Common myeloid progenitor, CD34-positive (primary cell): ENCODE measurements at regions of chr14 and their contacts with region 1.

Region 1: DNA sequence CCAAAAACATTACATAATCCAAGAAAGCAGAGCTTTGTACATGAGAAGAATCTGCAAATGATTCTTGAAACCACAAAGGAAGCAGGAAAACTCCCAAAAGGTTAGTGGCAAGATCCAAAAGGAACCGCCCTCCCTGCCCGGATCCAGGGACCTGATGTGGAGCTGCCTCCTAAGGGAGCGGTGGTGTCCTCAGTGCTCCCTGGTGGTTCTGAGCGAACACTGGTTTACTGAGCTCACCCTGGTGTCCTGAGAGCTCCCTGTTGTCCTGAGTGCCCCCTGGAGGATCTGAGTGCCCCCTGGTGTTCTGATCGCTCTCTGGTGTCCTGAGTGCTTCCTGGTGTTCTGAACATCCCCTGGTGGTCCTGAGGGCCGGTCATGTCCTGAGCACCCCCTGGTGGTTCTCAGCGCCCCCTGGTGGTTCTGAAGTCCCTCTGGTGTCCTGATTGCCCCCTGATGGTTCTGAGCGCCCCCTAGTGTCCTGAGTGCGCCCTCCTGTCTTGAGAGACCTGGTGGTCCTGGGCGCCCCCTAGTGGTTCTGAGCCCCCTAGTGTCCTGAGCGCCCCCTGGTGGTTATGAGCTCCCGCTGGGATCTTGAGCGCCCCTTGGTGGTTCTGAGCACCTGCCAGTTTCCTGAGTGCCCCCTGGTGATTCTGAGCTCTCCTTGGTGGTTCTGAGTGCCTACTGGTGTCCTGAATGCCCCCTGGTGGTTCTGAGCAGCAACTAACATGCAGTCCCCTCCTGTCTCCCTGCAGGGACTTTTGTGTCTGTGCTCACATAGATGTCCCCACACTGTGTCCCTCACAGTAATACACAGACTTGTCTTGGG is 891.1 kb downstream of the TMEM121 start:
- DNase-seq: peak; percentile 92 to 95 (median 93)
- H3K4me3 ChIP-seq: no peak overlapping the region
- H3K27ac ChIP-seq: no peak overlapping the region
- H3K4me1 ChIP-seq: peaks cover 0 to 12% (median 9%) of the 10 kb centered on the region in 4 experiments
- H3K27me3 ChIP-seq: no peaks in the 10 kb centered on the region

Region 2: GRCh38 chr14:106347890-106348755 is 69.3 kb before region 1 on chr14:
- CTCF ChIA-PET with region 1: interaction called, 10 read pairs
- POLR2A ChIA-PET with region 1: no interaction called
- DNase-seq: no peak
- H3K4me3 ChIP-seq: no peak overlapping the region
- H3K27ac ChIP-seq: no peak overlapping the region
- H3K4me1 ChIP-seq: peaks cover 0 to 24% (median 0%) of the 10 kb centered on the region in 4 experiments
- H3K27me3 ChIP-seq: peaks cover 0 to 2% (median 0%) of the 10 kb centered on the region in 5 experiments

Region 3: GRCh38 chr14:106372870-106373652 is 44.4 kb before region 1 on chr14:
- CTCF ChIA-PET with region 1: interaction called, 22 read pairs
- POLR2A ChIA-PET with region 1: no interaction called
- DNase-seq: peak; percentile 77 to 91 (median 89)
- H3K4me3 ChIP-seq: peak overlapping the region in 3 of 7 experiments; percentile 38 to 48 (median 43)
- H3K27ac ChIP-seq: no peak overlapping the region
- H3K4me1 ChIP-seq: peaks cover 0 to 17% (median 13%) of the 10 kb centered on the region in 4 experiments
- H3K27me3 ChIP-seq: peaks cover 0 to 7% (median 0%) of the 10 kb centered on the region in 5 experiments

Region 4: GRCh38 chr14:106390401-106390800 is 27.0 kb before region 1 on chr14:
- CTCF ChIA-PET with region 1: interaction called, 12 read pairs
- POLR2A ChIA-PET with region 1: no interaction called
- DNase-seq: no peak
- H3K4me3 ChIP-seq: no peak overlapping the region
- H3K27ac ChIP-seq: no peak overlapping the region
- H3K4me1 ChIP-seq: peaks cover 0 to 2% (median 0%) of the 10 kb centered on the region in 4 experiments
- H3K27me3 ChIP-seq: peaks cover under 1 to 24% (median 3%) of the 10 kb centered on the region in 5 experiments

Region 5: GRCh38 chr14:106518054-106518943 is 100.9 kb after region 1 on chr14:
- CTCF ChIA-PET with region 1: interaction called, 11 read pairs
- POLR2A ChIA-PET with region 1: no interaction called
- DNase-seq: peak; percentile 76 to 87 (median 86)
- H3K4me3 ChIP-seq: no peak overlapping the region
- H3K27ac ChIP-seq: no peak overlapping the region
- H3K4me1 ChIP-seq: peaks cover 6 to 17% (median 13%) of the 10 kb centered on the region in 4 experiments
- H3K27me3 ChIP-seq: peaks cover 0 to 42% (median 2%) of the 10 kb centered on the region in 5 experiments

Region 6: DNA sequence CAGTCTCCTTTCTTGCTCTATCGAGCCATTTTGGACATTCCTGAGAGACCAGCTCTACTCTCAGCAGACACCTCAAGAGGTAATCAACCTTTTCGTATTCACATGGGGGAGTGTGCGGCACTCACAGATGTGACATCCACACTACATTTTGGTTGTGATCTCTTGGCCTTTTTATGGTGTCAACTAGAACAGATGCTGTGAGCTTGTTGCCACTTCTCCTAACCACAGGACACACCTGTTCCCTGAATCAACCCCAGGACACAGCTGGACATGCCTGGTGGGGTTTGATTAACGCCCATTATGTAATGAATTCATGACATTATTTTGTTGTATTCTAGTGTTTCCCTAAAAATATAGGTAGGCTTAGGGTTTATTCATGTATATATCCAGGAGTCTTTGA is 252.6 kb after region 1 on chr14:
- CTCF ChIA-PET with region 1: no interaction called
- POLR2A ChIA-PET with region 1: no interaction called
- DNase-seq: peak; percentile 63 to 98 (median 97)
- H3K4me3 ChIP-seq: no peak overlapping the region
- H3K27ac ChIP-seq: peak overlapping the region in 1 of 2 experiments; percentile 49
- H3K4me1 ChIP-seq: peaks cover 2 to 33% (median 19%) of the 10 kb centered on the region in 4 experiments
- H3K27me3 ChIP-seq: no peaks in the 10 kb centered on the region